ENCODE measurements at regions of chr18 and their contacts with region 1.

Region 1: GRCh38 chr18:24878289-24878688 is 417.9 kb downstream of the HRH4 start:
- DNase-seq: no peak
- ATAC-seq: peak; percentile 57

Region 2: DNA sequence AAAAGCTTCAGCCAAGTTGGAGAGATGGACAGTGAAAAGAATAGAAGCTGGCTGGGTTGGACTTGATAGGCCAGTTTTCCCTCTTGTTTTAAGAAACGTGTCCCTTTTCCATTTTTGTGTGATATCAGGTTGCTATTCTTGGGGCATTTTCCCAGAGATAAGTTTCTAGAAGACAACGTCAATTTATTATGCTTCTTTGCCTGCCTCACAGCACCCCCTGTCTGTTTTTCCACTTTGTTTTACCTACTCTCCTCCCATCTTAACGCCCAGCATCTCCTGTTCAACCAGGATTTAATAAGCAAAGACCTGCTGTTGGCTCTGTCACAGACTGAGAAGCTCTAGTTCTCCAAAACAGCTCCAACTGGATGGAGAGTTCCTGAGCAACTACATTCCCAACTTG is 791.5 kb after region 1 on chr18:
- intact Hi-C with region 1: loop called (anchors 5 kb)
- DNase-seq: no peak
- ATAC-seq: no peak

Region 3: DNA sequence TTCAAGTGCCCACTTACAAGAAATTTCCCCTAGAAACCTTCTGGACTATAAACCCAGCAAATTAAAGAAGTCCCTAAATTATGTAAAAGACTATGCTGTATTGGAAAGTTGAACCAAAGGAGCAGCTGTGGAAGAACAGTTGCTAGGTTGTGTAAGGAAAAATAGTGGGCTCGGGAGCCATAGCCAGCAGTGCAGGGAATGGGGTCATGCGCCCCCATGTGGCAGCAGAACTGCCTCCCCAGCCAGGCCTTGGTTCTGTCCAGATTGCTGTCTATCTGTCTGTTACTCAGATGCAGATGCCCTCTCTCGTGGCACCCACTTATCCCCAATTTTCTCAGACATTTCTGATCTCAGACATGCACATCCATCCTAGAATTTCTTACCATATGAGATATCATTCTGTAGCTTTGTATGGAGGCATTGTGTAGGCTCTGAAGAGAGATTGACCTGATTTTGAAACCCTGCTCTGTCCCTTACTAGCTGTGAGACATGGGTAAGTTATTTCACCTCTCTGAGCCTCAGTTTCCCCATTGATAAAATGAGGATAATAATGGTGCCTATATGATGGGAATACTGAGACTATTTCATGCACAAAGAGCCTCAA is 953.8 kb after region 1 on chr18:
- intact Hi-C with region 1: loop called (anchors 1 kb)
- DNase-seq: peak; percentile 80
- ATAC-seq: peak; percentile 87

Region 4: GRCh38 chr18:25896178-25896780 is 1018.0 kb after region 1 on chr18:
- intact Hi-C with region 1: loop called (anchors 2 kb)
- DNase-seq: no peak
- ATAC-seq: no peak

Measured in Right ventricle myocardium inferior (tissue), 1 donor.